Caco-2 (cell line): ENCODE measurements at regions of chr10 and their contacts with region 1.

Region 1: GRCh38 chr10:132458593-132459300 is 61.7 kb downstream of the PWWP2B start:
- DNase-seq: peak in 1 of 2 experiments; percentile 81
- H3K4me3 ChIP-seq: no peak overlapping the region
- H3K4me3 Mint-ChIP-seq: no peak overlapping the region
- H3K27ac Mint-ChIP-seq: no peak overlapping the region
- H3K4me1 ChIP-seq: peaks cover 32% of the 10 kb centered on the region
- H3K4me1 Mint-ChIP-seq: peaks cover 7% of the 10 kb centered on the region
- H3K27me3 ChIP-seq: no peaks in the 10 kb centered on the region
- H3K27me3 Mint-ChIP-seq: no peaks in the 10 kb centered on the region
- CTCF ChIP-seq: peak; percentile 93 to 96

Region 2: GRCh38 chr10:132307823-132308587 is 150.7 kb before region 1 on chr10 and contains the start of gene STK32C:
- CTCF ChIA-PET with region 1: no interaction called
- POLR2A ChIA-PET with region 1: no interaction called
- intact Hi-C with region 1: no loop called
- DNase-seq: peak; percentile 90 to 91
- H3K4me3 ChIP-seq: peak within 1 kb of the TSS; percentile 94
- H3K4me3 Mint-ChIP-seq: peak within 1 kb of the TSS; percentile 91
- H3K27ac Mint-ChIP-seq: peak within 1 kb of the TSS; percentile 61
- H3K4me1 ChIP-seq: peaks cover 4% of the 10 kb centered on the region; the same call in 1 of the 2 replicates
- H3K4me1 Mint-ChIP-seq: peaks cover 6% of the 10 kb centered on the region
- H3K27me3 ChIP-seq: no peaks in the 10 kb centered on the region
- H3K27me3 Mint-ChIP-seq: peaks cover 4% of the 10 kb centered on the region
- CTCF ChIP-seq: no peak
- total RNA-seq, gene STK32C: 11.9 and 13.3 TPM in 2 replicates

Region 3: DNA sequence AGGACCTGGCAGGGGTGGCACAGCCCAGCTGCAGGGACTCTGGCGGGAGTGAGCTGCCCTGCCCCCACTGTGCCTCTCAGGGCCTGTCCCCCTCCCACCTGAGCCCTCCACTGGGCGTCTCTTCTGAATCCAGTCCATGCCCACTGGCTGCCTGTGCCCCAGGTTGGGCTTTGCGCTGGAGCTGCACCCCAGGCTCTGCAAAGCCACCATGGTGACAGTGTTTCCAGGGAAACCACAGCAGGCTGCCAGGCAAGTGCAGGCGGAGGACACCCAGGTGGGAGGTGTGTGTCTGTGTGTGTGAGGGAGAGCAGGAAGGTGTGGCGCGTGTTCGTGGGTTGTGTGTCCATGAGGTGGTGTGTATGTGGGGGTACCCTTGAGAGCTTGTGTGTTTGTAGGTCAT is 28.9 kb before region 1 on chr10:
- CTCF ChIA-PET with region 1: no interaction called
- POLR2A ChIA-PET with region 1: no interaction called
- intact Hi-C with region 1: no loop called
- DNase-seq: no peak
- H3K4me3 ChIP-seq: no peak overlapping the region
- H3K4me3 Mint-ChIP-seq: no peak overlapping the region
- H3K27ac Mint-ChIP-seq: no peak overlapping the region
- H3K4me1 ChIP-seq: no peaks in the 10 kb centered on the region
- H3K4me1 Mint-ChIP-seq: no peaks in the 10 kb centered on the region
- H3K27me3 ChIP-seq: no peaks in the 10 kb centered on the region
- H3K27me3 Mint-ChIP-seq: no peaks in the 10 kb centered on the region
- CTCF ChIP-seq: no peak

Region 4: GRCh38 chr10:132446661-132447194 is 12.0 kb before region 1 on chr10:
- CTCF ChIA-PET with region 1: no interaction called
- POLR2A ChIA-PET with region 1: no interaction called
- intact Hi-C with region 1: no loop called
- DNase-seq: peak; percentile 66 to 82
- H3K4me3 ChIP-seq: no peak overlapping the region
- H3K4me3 Mint-ChIP-seq: peak overlapping the region; percentile 52
- H3K27ac Mint-ChIP-seq: peak overlapping the region; percentile 78
- H3K4me1 ChIP-seq: peaks cover 25% of the 10 kb centered on the region
- H3K4me1 Mint-ChIP-seq: peaks cover 7% of the 10 kb centered on the region
- H3K27me3 ChIP-seq: no peaks in the 10 kb centered on the region
- H3K27me3 Mint-ChIP-seq: no peaks in the 10 kb centered on the region
- CTCF ChIP-seq: peak; percentile 32 to 70

Region 5: GRCh38 chr10:132476146-132477065 is 17.7 kb after region 1 on chr10:
- CTCF ChIA-PET with region 1: no interaction called
- POLR2A ChIA-PET with region 1: interaction called, 16 read pairs
- intact Hi-C with region 1: no loop called
- DNase-seq: no peak
- H3K4me3 ChIP-seq: no peak overlapping the region
- H3K4me3 Mint-ChIP-seq: no peak overlapping the region
- H3K27ac Mint-ChIP-seq: no peak overlapping the region
- H3K4me1 ChIP-seq: no peaks in the 10 kb centered on the region; the same call in 1 of the 2 replicates
- H3K4me1 Mint-ChIP-seq: no peaks in the 10 kb centered on the region
- H3K27me3 ChIP-seq: no peaks in the 10 kb centered on the region
- H3K27me3 Mint-ChIP-seq: peaks cover 3% of the 10 kb centered on the region
- CTCF ChIP-seq: no peak

Region 6: GRCh38 chr10:132516771-132517725 is 58.3 kb after region 1 on chr10:
- CTCF ChIA-PET with region 1: no interaction called
- POLR2A ChIA-PET with region 1: no interaction called
- intact Hi-C with region 1: loop called (anchors 5 kb)
- DNase-seq: peak; percentile 77 to 89
- H3K4me3 ChIP-seq: no peak overlapping the region
- H3K4me3 Mint-ChIP-seq: peak overlapping the region; percentile 29
- H3K27ac Mint-ChIP-seq: peak overlapping the region; percentile 21
- H3K4me1 ChIP-seq: peaks cover 43% of the 10 kb centered on the region
- H3K4me1 Mint-ChIP-seq: no peaks in the 10 kb centered on the region
- H3K27me3 ChIP-seq: no peaks in the 10 kb centered on the region
- H3K27me3 Mint-ChIP-seq: no peaks in the 10 kb centered on the region
- CTCF ChIP-seq: no peak

Region 7: DNA sequence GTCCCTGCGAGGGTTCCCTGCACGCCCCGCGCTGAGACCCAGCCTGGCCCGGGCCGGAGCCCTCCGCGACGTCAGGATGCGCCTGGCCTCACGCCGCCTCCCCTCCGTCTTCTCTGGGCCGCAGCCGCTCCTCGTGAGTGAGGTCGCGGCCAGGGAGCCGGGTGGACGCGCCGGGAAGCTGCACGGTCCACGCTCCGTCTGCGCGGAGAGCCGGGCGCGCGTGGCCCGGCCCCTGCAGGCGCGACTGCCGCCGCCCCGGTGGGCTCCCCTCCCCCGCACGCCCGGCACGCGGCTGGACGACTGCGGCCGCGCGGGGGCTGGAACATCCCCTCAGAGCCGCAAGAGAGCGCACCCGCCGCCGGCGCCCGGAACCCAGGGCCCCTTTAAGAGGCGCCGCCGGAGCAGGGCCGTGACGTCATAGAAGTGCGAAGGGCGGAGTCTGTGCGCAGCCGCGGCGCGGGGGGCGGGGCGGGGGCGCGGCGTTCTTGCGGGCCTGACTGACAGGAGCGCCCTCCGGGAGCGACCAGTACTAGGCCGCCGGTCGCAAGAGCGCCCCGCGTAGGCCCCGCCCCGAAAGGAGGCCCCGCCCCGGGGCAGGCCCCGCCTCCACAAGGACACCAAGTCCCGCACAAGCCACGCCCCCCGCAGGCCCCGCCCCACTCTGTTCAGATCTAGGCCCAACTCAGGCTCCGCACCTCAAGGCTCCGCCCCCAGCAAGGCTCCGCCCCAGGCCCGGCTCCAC is 78.4 kb after region 1 on chr10:
- CTCF ChIA-PET with region 1: interaction called, 6 read pairs
- POLR2A ChIA-PET with region 1: no interaction called
- intact Hi-C with region 1: loop called (anchors 2 kb)
- DNase-seq: peak; percentile 99 to 100
- H3K4me3 ChIP-seq: peak overlapping the region; percentile 92
- H3K4me3 Mint-ChIP-seq: peak overlapping the region; percentile 87
- H3K27ac Mint-ChIP-seq: peak overlapping the region; percentile 39
- H3K4me1 ChIP-seq: peaks cover 25% of the 10 kb centered on the region
- H3K4me1 Mint-ChIP-seq: peaks cover 28% of the 10 kb centered on the region
- H3K27me3 ChIP-seq: no peaks in the 10 kb centered on the region
- H3K27me3 Mint-ChIP-seq: no peaks in the 10 kb centered on the region
- CTCF ChIP-seq: peak in 1 of 2 experiments; percentile 41

Region 8: DNA sequence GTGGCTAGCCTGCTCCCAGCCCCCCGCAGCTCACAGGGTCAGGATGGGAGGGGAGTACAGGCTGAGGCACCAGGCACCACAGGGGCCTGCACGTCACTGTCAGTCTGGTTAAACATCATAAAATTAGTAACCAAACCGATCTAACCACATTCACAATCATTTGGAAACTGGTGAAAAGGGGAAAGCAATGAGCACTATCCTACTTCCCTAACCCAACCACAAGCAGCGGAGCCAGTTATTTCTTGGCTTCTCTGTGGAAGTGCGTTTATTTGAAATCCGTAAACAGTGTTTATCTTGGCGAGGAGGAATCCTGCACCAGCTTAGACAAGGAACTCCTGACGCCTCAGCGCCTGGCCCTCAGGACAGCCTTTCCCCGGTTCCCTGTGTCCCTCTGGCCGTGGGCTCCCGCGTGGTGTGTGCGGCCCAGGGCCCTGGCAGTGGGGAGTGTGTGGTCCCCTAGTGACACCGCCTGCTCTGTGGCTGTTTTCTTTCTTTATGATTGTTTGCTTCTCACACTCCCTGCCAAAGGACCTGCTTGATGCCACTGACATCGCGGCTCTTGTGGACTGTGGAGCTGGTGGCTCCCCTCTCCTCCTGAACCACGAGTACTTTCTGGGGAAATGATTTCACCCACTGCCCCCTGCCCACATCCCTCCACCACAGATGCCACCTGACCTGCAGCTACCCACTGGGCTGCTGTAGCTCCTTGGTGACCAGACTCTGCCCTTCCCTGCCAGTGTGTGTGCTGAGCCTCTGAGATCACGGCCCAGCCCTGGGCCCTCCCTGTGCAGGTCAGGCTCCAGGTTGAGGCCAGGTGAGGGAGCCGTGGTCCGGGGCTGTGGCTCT is 116.8 kb after region 1 on chr10:
- CTCF ChIA-PET with region 1: interaction called, 3 read pairs
- POLR2A ChIA-PET with region 1: no interaction called
- intact Hi-C with region 1: loop called (anchors 2 kb)
- DNase-seq: peak; percentile 58 to 75
- H3K4me3 ChIP-seq: no peak overlapping the region
- H3K4me3 Mint-ChIP-seq: no peak overlapping the region
- H3K27ac Mint-ChIP-seq: peak overlapping the region; percentile 26
- H3K4me1 ChIP-seq: peaks cover 33% of the 10 kb centered on the region
- H3K4me1 Mint-ChIP-seq: peaks cover 10% of the 10 kb centered on the region
- H3K27me3 ChIP-seq: no peaks in the 10 kb centered on the region
- H3K27me3 Mint-ChIP-seq: no peaks in the 10 kb centered on the region
- CTCF ChIP-seq: no peak

Region 9: GRCh38 chr10:132593389-132593788 is 134.6 kb after region 1 on chr10:
- CTCF ChIA-PET with region 1: no interaction called
- POLR2A ChIA-PET with region 1: no interaction called
- intact Hi-C with region 1: loop called (anchors 5 kb)
- DNase-seq: no peak
- H3K4me3 ChIP-seq: no peak overlapping the region
- H3K4me3 Mint-ChIP-seq: peak overlapping the region; percentile 41
- H3K27ac Mint-ChIP-seq: peak overlapping the region; percentile 58
- H3K4me1 ChIP-seq: peaks cover 46% of the 10 kb centered on the region
- H3K4me1 Mint-ChIP-seq: peaks cover 47% of the 10 kb centered on the region
- H3K27me3 ChIP-seq: no peaks in the 10 kb centered on the region
- H3K27me3 Mint-ChIP-seq: no peaks in the 10 kb centered on the region
- CTCF ChIP-seq: no peak

Region 10: DNA sequence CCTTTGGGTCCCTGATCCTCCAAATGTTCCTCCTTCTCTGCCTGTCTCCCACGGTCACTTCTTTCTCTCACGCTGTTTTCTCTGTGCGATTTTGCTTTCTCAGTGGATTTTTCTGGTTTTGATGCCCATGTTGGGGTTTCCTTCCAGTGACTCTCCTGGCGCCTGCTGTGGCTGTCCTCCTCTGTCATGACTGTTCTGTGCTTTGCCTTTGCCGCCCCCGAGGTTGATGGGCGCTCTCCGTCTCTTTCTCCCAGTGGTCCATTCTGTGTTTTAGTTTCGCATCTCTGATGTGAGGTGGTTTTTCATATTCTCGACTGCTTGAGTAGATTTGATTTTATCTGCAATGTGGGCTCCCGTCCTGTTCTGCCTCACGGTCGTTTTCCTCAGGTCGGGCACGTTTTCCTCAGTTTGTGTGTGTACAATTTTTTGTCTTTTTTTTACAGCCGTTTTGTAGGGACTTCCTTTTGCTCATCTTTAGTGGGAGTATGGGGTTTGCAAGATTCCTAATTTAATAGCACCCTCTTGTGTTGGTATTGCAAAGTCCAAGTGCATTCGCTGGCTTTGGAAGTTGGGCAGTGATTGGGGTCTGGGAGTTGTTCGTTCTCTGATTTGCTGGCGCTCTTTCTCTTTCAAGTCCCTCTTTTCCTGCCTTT is 178.9 kb after region 1 on chr10:
- CTCF ChIA-PET with region 1: interaction called, 3 read pairs
- POLR2A ChIA-PET with region 1: no interaction called
- intact Hi-C with region 1: loop called (anchors 1 kb)
- DNase-seq: peak in 1 of 2 experiments; percentile 61
- H3K4me3 ChIP-seq: no peak overlapping the region
- H3K4me3 Mint-ChIP-seq: no peak overlapping the region
- H3K27ac Mint-ChIP-seq: no peak overlapping the region
- H3K4me1 ChIP-seq: no peaks in the 10 kb centered on the region
- H3K4me1 Mint-ChIP-seq: peaks cover 9% of the 10 kb centered on the region
- H3K27me3 ChIP-seq: no peaks in the 10 kb centered on the region
- H3K27me3 Mint-ChIP-seq: no peaks in the 10 kb centered on the region
- CTCF ChIP-seq: peak; percentile 57 to 69